Activated CD8-positive, alpha-beta T cell treated with anti-CD3 and anti-CD28 coated beads for 36 hours (primary cell): ENCODE measurements at regions of chr1 and their contacts with region 1.

Region 1: DNA sequence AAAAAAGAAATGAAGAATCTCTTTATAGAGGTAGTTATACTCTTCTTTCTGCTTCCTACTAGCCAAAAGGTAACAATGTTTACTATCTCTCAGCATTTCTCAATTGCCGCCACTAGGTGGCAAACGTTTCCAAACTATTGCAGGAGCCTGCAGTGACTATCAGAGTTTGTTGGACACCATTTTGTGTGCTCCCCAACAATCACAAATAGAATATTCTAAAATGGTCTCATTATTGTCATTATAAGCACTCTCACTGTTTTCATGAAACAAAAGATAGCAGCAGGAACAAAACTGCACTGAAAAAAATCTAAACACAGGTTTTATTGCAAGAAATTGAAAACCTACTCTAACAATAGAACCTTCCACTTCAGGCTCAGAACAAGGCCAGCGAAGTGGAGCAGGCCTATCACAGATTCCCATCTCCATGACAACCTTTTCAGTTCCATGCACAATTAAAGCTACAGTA is 83.9 kb upstream of the PLPPR4 start:
- DNase-seq: peak; percentile 83
- ATAC-seq: peak; percentile 93
- H3K4me3 Mint-ChIP-seq: no peak overlapping the region
- H3K27ac Mint-ChIP-seq: no peak overlapping the region
- H3K4me1 Mint-ChIP-seq: no peaks in the 10 kb centered on the region
- H3K27me3 Mint-ChIP-seq: no peaks in the 10 kb centered on the region
- CTCF ChIP-seq: peak; percentile 79

Region 2: GRCh38 chr1:99481391-99481996 is 301.1 kb after region 1 on chr1:
- CTCF ChIA-PET with region 1: interaction called, 14 read pairs
- POLR2A ChIA-PET with region 1: no interaction called
- intact Hi-C with region 1: loop called (anchors 2 kb)
- DNase-seq: peak; percentile 57
- ATAC-seq: peak; percentile 60
- H3K4me3 Mint-ChIP-seq: no peak overlapping the region
- H3K27ac Mint-ChIP-seq: no peak overlapping the region
- H3K4me1 Mint-ChIP-seq: no peaks in the 10 kb centered on the region
- H3K27me3 Mint-ChIP-seq: peaks cover 15% of the 10 kb centered on the region
- CTCF ChIP-seq: peak; percentile 87

Region 3: DNA sequence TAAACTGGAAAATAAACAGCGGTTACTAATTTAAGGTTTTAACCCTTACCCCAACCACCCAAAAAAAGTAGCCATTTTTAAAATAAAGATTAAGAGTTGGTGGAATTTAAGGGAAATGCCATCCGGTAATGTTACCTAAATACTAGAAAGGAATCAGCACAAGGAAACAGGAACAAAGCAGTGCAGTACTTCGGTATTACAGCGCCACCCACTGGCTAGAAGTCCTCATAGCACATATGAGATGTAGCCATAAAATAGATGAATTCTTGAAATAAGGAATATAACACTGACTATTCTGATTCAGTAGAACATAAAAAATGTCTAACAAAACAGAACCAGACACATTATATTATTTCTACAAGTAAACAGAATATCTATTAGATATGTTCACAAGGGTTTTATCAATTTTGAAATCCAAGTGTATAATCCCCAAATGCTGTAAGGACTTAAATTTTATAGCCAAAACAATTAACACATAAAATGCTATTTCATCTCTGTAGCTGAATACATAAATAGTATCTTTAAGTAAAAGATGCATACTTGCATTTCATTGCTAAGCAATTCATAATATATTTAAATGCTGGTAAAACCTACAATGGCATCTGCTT is 527.3 kb after region 1 on chr1:
- CTCF ChIA-PET with region 1: interaction called, 7 read pairs
- POLR2A ChIA-PET with region 1: no interaction called
- intact Hi-C with region 1: loop called (anchors 5 kb)
- DNase-seq: peak; percentile 82
- ATAC-seq: peak; percentile 47
- H3K4me3 Mint-ChIP-seq: no peak overlapping the region
- H3K27ac Mint-ChIP-seq: no peak overlapping the region
- H3K4me1 Mint-ChIP-seq: peaks cover 3% of the 10 kb centered on the region
- H3K27me3 Mint-ChIP-seq: no peaks in the 10 kb centered on the region
- CTCF ChIP-seq: peak; percentile 95